RWPE1 (cell line): ENCODE measurements at regions of chr18 and their contacts with region 1.

Region 1: DNA sequence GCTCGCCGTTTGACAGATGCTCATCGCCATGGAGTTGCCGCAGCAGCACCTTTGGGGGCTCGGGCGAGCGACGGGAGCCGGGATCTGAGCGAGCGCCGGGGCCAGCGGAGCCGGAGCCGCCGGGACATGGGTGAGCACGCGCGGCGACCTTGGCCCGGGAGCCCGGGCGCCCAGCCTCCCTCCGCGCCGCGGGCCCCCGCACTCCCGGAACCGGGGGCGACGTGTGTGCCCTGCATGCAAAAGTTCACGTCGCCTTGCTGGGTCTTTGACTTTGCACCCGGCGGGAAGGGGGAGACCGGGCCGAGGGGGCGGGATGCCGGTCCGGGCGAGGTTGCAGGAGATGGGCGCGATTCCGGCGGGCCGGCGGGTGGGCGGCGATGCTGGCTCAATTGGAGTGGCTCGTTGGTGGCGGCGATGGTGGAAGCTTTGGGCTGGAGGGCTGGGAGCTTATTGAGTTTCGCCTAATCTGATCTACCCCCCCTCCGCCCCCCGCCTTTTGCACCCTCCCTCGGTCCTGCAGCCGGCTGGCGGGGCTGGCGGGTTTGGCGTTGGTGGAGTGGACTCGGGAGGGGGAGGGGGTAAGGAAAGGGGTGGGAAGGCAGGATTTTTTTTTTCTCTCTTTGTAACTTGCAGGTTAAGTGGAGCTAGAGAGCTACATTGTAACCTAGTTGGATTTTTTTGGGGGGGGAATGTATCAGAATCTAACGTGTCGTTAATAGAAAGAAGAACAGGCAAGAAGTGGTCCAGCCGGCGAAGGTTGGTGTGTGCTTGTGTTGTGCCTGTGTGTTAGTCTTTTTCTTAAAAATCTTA is at the start of gene SETBP1:
- DNase-seq: peak; percentile 52
- H3K27ac ChIP-seq: peak within 1 kb of the TSS; percentile 83
- CTCF ChIP-seq: no peak

Region 2: DNA sequence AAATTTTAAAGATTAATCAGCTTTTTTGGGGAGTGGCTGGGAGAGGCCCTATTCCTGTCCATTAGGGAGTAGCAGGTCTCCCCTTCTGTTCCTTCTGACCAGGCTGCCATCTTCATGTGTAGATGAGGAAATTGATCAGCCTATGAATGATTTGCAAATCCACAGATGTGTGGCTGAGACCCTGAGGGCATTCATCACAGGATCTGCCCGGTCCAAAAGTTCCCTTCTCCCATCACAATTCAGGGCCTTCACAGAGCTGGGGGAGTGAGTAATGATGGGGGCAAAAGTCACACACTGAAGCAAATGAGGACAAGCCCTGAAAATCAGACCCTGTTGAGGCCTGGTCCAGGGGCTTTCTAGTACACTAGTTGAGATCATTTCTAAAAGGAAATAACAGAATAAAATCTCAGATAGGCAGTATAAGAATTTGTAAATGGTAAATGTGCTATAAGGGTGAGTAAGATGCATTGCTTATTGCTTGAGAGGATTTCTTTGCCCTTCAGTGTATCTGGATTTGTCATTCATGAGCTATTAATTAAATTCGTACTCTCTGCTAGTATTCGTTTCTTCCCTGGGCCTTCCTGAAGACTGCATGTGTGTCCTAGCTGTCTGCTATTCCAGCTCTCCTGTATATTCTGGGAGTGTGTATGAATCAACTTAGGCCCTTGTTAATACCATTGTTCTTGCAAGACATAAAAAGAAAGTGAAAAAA is 53.4 kb after region 1 on chr18:
- CTCF ChIA-PET with region 1: no interaction called
- POLR2A ChIA-PET with region 1: interaction called, 10 read pairs
- DNase-seq: peak; percentile 9
- H3K27ac ChIP-seq: peak overlapping the region; percentile 90
- CTCF ChIP-seq: no peak